GM12878 (cell line): ENCODE measurements at regions of chr2 and their contacts with region 1.

Region 1: GRCh38 chr2:158456309-158457066 is at the starts of genes CCDC148 and PKP4:
- DNase-seq: peak; percentile 66
- ATAC-seq: peak; percentile 92
- H3K4me3 ChIP-seq: peak within 1 kb of the TSS; percentile 78
- H3K27ac ChIP-seq: peak within 1 kb of the TSS; percentile 44
- H3K4me1 ChIP-seq: peaks cover 5% of the 10 kb centered on the region; the same call in 1 of the 2 replicates
- H3K27me3 ChIP-seq: no peaks in the 10 kb centered on the region
- CTCF ChIP-seq: no peak; a peak in 1 of 6 replicates
- EP300 ChIP-seq: no peak
- POLR2A ChIP-seq: peak; percentile 21; the same call in 1 of the 2 replicates
- RAD21 ChIP-seq: no peak
- polyA plus RNA-seq, gene CCDC148: 0.18 TPM in 1 of 2 experiments, not detected in the other
- polyA plus RNA-seq, gene PKP4: 5.2 to 7.2 TPM

Region 2: DNA sequence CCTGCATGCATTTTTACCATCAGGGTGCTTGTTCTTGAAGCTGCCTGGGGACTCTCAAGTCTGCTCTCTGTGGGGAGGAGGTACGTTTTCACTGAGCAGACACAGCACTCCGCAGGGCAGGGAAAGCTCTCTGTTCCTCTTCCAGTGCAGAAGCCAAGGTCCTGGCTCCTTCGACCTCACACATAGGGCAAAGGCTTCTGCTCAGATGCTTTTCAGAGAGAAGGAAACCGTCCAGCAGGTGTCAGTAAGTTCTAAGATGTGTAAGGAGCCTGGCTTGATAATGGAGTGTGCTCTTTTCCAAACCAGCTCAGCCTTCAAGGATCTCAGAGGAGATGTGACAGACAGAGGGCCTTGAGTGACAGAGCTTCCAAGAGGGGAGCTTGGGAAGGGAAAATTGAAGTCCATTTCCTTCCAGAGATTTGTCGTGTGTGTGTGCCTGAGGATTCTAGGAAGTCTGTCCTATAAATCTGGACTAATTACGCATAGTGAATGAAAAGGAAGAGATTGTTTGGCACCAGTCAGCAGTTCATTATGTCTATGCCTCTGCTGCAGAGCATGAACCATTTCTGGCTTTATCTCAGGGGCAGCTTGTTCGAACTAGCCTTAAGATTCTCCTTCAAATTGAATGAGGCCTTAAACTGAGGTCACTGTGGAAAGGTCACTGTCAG is 422.2 kb before region 1 on chr2:
- CTCF ChIA-PET with region 1: no interaction called
- POLR2A ChIA-PET with region 1: no interaction called
- RAD21 ChIA-PET with region 1: no interaction called
- SMC1A ChIA-PET with region 1: no interaction called
- in situ Hi-C with region 1: no loop called
- intact Hi-C with region 1: loop called (anchors 5 kb)
- DNase-seq: no peak
- ATAC-seq: peak; percentile 74
- H3K4me3 ChIP-seq: no peak overlapping the region
- H3K27ac ChIP-seq: no peak overlapping the region
- H3K4me1 ChIP-seq: no peaks in the 10 kb centered on the region
- H3K27me3 ChIP-seq: no peaks in the 10 kb centered on the region; a peak in 1 of 4 replicates
- CTCF ChIP-seq: peak; percentile 38 to 50 (median 43); a peak in 5 of 6 replicates
- EP300 ChIP-seq: no peak
- POLR2A ChIP-seq: no peak
- RAD21 ChIP-seq: peak; percentile 63

Region 3: DNA sequence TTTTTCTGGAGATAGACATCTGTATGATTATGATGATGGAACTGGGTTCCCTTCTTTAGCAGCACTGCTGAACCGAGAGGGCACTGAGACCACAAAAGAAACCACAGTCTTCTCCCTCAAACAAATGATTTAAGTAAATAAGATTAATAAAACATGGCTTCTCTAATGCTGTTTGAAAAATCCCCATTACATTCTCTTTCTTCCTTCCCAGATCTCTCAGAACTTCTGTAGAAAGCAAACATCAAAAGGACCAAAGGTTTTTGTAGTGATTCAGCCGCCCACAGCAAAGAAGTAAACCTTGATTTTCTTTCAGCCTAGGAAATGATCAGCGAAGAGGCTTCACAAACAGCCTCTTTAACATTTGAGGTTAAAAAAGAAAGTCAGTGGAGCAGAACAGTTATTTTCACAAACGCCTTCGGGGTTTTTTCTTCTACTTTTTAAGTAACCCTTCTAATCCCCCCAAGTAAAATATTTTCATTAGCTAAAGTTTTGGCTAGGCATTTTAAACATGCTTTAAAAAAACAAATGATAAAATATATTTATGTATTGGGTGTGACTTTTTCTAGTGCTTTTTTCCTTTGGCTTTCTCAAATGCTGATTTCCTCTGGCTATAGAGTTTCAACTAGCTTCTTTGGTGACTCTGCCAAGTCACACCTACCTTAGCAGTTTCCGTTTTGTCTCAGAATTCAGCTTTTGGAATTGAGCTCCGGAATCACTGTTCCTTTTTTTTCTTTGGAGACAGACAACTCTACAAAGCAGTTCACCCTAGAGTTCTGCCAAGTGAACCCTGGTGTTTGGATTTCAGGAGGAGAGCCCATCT is 265.2 kb before region 1 on chr2:
- CTCF ChIA-PET with region 1: interaction called, 3 read pairs
- POLR2A ChIA-PET with region 1: no interaction called
- RAD21 ChIA-PET with region 1: no interaction called
- SMC1A ChIA-PET with region 1: no interaction called
- in situ Hi-C with region 1: no loop called
- intact Hi-C with region 1: loop called (anchors 2 kb)
- DNase-seq: peak; percentile 48
- ATAC-seq: peak; percentile 92
- H3K4me3 ChIP-seq: peak overlapping the region; percentile 34; the same call in 1 of the 2 replicates
- H3K27ac ChIP-seq: no peak overlapping the region; the same call in 1 of the 2 replicates
- H3K4me1 ChIP-seq: peaks cover 13% of the 10 kb centered on the region
- H3K27me3 ChIP-seq: 0 out of 4 replicates have a peak, but pooled peaks cover 0 to 5% of the 10 kb centered on the region in 2 experiments
- CTCF ChIP-seq: no peak
- EP300 ChIP-seq: peak in 1 of 2 experiments; percentile 27; a peak in 1 of 4 replicates
- POLR2A ChIP-seq: no peak
- RAD21 ChIP-seq: peak; percentile 14; the same call in 1 of the 2 replicates

Region 4: DNA sequence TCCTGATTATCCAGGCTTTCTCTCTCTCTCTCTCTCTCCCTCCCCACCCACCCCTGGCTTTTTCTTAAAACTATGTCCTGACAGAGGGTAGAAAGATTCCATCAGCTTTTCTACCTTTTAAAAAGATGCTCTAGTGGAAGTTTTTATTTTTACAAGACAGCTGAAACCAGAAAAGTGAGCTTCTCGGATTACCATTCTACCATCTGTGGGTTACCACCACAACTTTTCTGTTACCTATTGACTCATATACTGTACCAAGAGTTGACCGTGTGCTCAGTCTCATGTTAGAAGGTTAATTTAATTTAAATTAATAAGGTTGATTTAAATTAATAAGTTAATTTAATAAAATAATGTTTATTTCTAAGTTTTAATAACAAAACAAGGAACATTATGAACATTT is 217.2 kb before region 1 on chr2:
- CTCF ChIA-PET with region 1: no interaction called
- POLR2A ChIA-PET with region 1: no interaction called
- RAD21 ChIA-PET with region 1: no interaction called
- SMC1A ChIA-PET with region 1: no interaction called
- in situ Hi-C with region 1: no loop called
- intact Hi-C with region 1: no loop called
- DNase-seq: no peak
- ATAC-seq: peak; percentile 29; the same call in 1 of the 3 replicates
- H3K4me3 ChIP-seq: no peak overlapping the region
- H3K27ac ChIP-seq: no peak overlapping the region
- H3K4me1 ChIP-seq: no peaks in the 10 kb centered on the region
- H3K27me3 ChIP-seq: peaks cover 0 to 2% of the 10 kb centered on the region in 2 experiments; a peak in 2 of 4 replicates
- CTCF ChIP-seq: no peak
- EP300 ChIP-seq: no peak
- POLR2A ChIP-seq: no peak
- RAD21 ChIP-seq: no peak

Region 5: DNA sequence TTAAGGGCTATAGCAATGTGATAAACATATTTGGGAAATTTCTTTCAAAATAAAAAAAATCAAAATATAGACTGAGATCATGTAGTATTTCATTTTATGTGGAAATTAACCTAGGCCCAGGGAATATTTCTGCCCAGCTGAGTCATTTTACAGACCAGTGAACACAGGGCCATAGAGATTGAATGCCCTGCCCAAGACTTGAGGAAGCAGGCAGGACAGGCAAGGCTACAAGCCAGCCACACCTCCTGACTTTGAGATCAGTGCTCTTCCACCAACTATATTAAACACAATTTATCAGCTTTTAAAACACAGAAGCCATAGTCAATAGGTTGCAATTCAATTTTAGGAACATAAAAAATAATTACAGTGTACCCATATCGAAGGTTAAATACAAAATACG is 12.9 kb before region 1 on chr2:
- CTCF ChIA-PET with region 1: no interaction called
- POLR2A ChIA-PET with region 1: no interaction called
- RAD21 ChIA-PET with region 1: no interaction called
- SMC1A ChIA-PET with region 1: no interaction called
- in situ Hi-C with region 1: no loop called
- intact Hi-C with region 1: no loop called
- DNase-seq: no peak
- ATAC-seq: no peak
- H3K4me3 ChIP-seq: no peak overlapping the region
- H3K27ac ChIP-seq: no peak overlapping the region
- H3K4me1 ChIP-seq: no peaks in the 10 kb centered on the region
- H3K27me3 ChIP-seq: no peaks in the 10 kb centered on the region
- CTCF ChIP-seq: no peak
- EP300 ChIP-seq: no peak
- POLR2A ChIP-seq: no peak
- RAD21 ChIP-seq: no peak